ENCODE measurements at regions of chr15 and their contacts with region 1.

Region 1: GRCh38 chr15:50260969-50261496 is 4.5 kb downstream of the HDC start:
- DNase-seq: no peak
- H3K4me3 Mint-ChIP-seq: peak overlapping the region; percentile 52
- H3K27ac Mint-ChIP-seq: peak overlapping the region; percentile 98
- H3K4me1 Mint-ChIP-seq: peaks cover 73% of the 10 kb centered on the region
- H3K27me3 Mint-ChIP-seq: no peaks in the 10 kb centered on the region

Region 2: DNA sequence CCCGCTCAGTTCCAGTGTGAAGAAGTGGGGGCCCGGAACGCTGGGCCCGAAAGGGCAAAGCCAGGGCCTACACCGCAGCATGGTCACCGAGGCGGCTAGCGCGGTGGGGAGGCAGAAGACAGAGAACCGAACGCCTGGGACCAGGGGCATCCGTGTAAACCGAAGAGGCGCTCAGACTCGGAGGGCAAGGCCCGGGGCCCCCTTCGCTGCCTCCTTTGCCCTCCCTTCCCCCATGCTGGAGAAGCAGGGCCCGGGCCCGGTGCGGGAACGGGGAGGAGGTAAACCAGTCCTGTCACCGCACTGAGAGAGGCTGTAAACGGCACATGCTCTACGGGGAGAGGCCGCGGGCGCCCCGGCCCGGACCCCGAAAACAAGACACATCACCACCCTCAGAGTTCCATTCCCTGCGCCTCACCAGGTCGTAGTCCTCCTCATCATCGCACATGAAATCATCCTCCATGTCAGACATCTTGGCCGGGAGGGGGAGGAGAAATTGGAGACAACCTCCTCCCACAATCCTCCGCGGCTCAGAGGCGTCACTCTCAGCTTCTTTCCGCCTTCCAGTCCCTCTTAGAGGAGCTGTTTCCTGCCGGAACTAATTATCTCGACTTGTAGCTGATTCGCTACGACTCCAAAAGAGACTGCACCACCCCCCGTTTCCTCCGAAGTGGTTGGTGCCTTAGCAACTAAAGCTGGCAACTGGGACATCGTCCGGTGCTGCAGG is 1105.8 kb before region 1 on chr15 and contains the start of gene COPS2:
- CTCF ChIA-PET with region 1: no interaction called
- intact Hi-C with region 1: loop called (anchors 10 kb)
- DNase-seq: peak; percentile 97
- H3K4me3 Mint-ChIP-seq: peak within 1 kb of the TSS; percentile 98
- H3K27ac Mint-ChIP-seq: peak within 1 kb of the TSS; percentile 97
- H3K4me1 Mint-ChIP-seq: peaks cover 41% of the 10 kb centered on the region
- H3K27me3 Mint-ChIP-seq: no peaks in the 10 kb centered on the region
- total RNA-seq, gene COPS2: 79.7 to 86.4 TPM

Region 3: DNA sequence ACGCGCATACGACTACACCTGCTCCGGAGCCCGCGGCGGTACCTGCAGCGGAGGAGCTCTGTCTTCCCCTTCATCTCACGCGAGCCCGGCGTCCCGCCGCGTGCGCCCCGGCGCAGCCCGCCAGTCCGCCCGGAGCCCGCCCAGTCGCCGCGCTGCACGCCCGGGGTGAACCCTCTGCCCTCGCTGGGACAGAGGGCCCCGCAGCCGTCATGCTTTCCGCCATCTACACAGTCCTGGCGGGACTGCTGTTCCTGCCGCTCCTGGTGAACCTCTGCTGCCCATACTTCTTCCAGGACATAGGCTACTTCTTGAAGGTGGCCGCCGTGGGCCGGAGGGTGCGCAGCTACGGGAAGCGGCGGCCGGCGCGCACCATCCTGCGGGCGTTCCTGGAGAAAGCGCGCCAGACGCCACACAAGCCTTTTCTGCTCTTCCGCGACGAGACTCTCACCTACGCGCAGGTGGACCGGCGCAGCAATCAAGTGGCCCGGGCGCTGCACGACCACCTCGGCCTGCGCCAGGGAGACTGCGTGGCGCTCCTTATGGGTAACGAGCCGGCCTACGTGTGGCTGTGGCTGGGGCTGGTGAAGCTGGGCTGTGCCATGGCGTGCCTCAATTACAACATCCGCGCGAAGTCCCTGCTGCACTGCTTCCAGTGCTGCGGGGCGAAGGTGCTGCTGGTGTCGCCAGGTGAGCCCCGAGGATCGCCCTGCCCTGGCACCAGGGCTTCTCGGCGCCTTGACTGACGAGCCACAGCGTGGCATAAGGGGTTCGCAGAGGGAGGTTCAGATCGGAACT is 78.6 kb before region 1 on chr15:
- CTCF ChIA-PET with region 1: interaction called, 4 read pairs
- intact Hi-C with region 1: loop called (anchors 1 kb)
- DNase-seq: peak; percentile 73
- H3K4me3 Mint-ChIP-seq: peak overlapping the region; percentile 98
- H3K27ac Mint-ChIP-seq: peak overlapping the region; percentile 87
- H3K4me1 Mint-ChIP-seq: peaks cover 29% of the 10 kb centered on the region
- H3K27me3 Mint-ChIP-seq: peaks cover 25% of the 10 kb centered on the region

Region 4: GRCh38 chr15:50278496-50278895 is 17.5 kb after region 1 on chr15:
- CTCF ChIA-PET with region 1: interaction called, 3 read pairs
- intact Hi-C with region 1: loop called (anchors 1 kb)
- DNase-seq: no peak
- H3K4me3 Mint-ChIP-seq: no peak overlapping the region
- H3K27ac Mint-ChIP-seq: peak overlapping the region; percentile 78
- H3K4me1 Mint-ChIP-seq: peaks cover 42% of the 10 kb centered on the region
- H3K27me3 Mint-ChIP-seq: no peaks in the 10 kb centered on the region

Region 5: DNA sequence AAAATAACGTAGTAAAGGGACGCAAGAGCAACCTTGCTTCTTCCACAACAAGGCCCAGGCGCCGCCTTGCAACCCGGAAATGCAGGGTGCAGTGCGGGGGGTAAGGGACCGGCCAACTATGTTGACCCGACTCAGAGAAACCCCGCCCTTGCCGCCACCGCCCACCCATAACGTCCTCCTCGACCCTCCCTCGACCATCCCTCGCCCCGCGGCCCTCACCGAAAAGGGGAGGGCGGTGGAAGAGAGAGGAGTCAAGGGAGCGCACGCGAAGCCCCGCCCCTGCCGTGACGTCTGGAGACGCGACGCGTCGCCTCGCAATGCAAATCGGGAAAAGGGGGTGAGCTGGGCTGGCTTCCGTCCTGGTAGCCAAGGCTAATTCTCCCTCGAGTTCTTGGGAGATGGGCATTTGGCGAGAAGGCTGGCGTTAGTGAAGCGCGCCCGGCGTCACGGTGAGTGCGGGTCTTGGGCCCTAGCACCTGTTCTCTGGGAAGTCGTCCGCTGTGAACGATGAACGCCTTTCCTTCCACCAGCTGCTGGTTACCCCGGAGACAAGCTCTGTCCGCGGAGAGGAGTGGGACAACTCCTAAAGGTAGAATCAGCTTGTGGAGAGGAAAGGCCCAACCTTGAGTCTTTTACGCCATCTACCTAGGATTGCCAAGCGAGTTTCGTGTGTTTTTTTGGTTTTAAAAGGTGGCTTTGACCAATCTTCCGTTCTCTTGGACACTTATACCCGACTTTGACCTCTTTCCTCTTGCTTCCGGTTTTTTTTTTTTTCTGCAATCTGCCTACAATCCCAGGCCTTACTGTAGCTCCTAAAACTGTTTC is 163.2 kb after region 1 on chr15 and contains the start of gene USP8:
- CTCF ChIA-PET with region 1: no interaction called
- intact Hi-C with region 1: loop called (anchors 5 kb)
- DNase-seq: peak; percentile 96
- H3K4me3 Mint-ChIP-seq: peak within 1 kb of the TSS; percentile 94
- H3K27ac Mint-ChIP-seq: peak within 1 kb of the TSS; percentile 92
- H3K4me1 Mint-ChIP-seq: peaks cover 30% of the 10 kb centered on the region
- H3K27me3 Mint-ChIP-seq: no peaks in the 10 kb centered on the region
- total RNA-seq, gene USP8: 31.6 TPM

Region 6: DNA sequence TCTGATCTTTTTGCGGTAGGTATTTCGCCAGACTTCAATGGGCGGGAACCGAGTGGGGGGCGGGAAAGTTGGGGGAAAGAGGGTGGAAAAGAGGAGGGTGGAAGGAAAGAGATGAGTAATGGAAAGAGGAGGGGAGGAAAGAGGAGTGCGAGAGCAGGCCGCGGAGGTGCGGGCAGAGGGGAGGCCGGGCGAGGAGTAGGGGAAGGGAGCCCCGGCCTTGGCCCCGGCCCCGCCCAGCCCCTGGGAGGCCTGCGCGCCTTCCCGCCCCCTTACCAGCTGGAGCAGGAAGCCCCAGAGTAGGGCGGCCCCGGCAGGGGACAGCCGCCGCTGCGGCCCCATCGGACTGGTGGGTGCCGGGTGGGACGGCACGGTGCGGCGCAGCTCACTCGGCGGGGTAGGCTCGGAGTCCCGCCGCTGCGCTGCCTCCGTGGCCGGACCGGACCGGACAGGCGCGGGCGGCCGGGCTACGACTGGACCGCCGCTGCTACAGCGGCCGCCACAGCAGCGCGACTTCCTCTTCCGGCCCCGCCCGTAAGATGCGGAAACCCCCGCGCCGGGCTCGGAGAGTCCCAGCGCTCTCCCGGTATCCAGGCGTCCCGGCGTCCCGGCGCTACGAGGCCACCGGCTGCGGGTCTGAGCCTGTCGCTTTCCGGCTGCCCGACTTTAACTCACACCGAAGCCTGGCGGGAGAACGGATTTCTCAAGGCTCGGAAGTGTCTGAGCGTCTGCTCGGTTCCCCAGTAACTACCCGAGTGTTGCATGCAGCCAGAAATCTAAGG is 504.4 kb after region 1 on chr15 and contains the start of gene SPPL2A:
- CTCF ChIA-PET with region 1: no interaction called
- intact Hi-C with region 1: loop called (anchors 1 kb)
- DNase-seq: peak; percentile 93
- H3K4me3 Mint-ChIP-seq: peak within 1 kb of the TSS; percentile 90
- H3K27ac Mint-ChIP-seq: peak within 1 kb of the TSS; percentile 99
- H3K4me1 Mint-ChIP-seq: peaks cover 55% of the 10 kb centered on the region
- H3K27me3 Mint-ChIP-seq: no peaks in the 10 kb centered on the region
- total RNA-seq, gene SPPL2A: 37.7 to 41.6 TPM

Measured in activated naive CD4-positive, alpha-beta T cell treated with anti-CD3 and anti-CD28 coated beads for 36 hours (primary cell).